ENCODE measurements at regions of chr4 and their contacts with region 1.

Region 1: GRCh38 chr4:123102897-123103471 is 180.6 kb upstream of the NUDT6 start:
- DNase-seq: no peak
- H3K4me3 ChIP-seq: no peak overlapping the region
- H3K27ac ChIP-seq: no peak overlapping the region
- H3K4me1 ChIP-seq: peaks cover 0 to 5% of the 10 kb centered on the region in 2 donors
- H3K27me3 ChIP-seq: no peaks in the 10 kb centered on the region
- CTCF ChIP-seq: peak; percentile 52 to 80 (median 70)
- POLR2A ChIP-seq: no peak

Region 2: DNA sequence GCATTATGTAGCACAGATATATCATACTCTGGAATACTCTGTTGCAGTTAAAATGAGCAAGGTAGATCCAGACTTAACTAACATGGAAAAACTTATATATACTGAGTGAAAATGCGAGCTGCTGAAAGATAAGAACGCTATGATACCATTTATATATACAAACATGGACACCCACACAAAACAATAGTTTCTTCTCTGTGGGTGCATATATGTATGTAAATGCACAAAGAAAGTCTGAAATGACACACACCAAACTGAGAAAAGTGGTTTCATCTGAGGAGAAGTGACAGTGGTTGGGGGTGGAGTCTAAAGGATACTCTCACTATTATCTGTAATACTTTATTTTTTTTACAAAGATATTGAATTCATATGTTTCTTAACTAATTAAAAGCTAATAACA is 288.6 kb before region 1 on chr4:
- intact Hi-C with region 1: no loop called
- DNase-seq: no peak
- H3K4me3 ChIP-seq: no peak overlapping the region
- H3K27ac ChIP-seq: no peak overlapping the region
- H3K4me1 ChIP-seq: no peaks in the 10 kb centered on the region
- H3K27me3 ChIP-seq: no peaks in the 10 kb centered on the region
- CTCF ChIP-seq: no peak
- POLR2A ChIP-seq: no peak

Region 3: DNA sequence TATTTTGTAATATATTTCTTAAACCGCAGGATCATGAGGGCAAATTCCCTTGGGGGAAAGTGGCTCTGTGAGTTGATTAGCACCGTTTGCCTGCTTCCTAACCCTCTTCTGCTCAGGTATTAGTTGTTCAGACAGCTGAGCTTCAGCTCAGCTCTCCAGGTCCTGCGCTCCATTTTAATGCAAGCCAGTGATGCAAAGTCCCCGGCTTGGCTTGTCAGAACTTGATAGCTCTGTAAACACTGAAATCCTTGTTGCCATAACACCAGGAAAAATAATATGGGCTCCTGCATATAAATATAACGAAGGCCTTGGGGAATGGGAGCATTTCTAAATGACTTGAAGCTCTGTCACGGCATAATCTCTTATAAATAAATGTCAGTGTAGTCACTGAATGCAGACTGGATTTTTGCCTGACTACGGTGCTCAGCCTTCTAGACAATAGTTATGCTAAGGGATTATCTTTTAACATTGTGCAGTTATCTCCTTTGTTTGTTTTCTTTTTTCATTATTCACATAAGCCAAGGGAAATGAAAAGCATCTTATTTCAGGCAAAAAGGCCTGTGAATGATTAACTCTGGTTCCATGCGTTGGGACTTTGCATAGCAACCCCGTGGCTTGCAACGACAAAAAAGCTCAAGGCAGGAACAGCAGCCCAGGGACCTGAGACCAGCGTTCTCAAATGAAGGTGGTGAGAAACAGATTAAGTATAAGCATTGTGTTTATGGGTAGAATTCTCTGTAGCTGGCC is 546.8 kb after region 1 on chr4:
- intact Hi-C with region 1: loop called in 1 of 2 experiments (anchors 10 kb)
- DNase-seq: no peak
- H3K4me3 ChIP-seq: no peak overlapping the region
- H3K27ac ChIP-seq: peak overlapping the region in 2 of 5 donors; percentile 13 to 37
- H3K4me1 ChIP-seq: peaks cover 0 to 8% of the 10 kb centered on the region in 2 donors
- H3K27me3 ChIP-seq: no peaks in the 10 kb centered on the region
- CTCF ChIP-seq: no peak
- POLR2A ChIP-seq: no peak

Region 4: DNA sequence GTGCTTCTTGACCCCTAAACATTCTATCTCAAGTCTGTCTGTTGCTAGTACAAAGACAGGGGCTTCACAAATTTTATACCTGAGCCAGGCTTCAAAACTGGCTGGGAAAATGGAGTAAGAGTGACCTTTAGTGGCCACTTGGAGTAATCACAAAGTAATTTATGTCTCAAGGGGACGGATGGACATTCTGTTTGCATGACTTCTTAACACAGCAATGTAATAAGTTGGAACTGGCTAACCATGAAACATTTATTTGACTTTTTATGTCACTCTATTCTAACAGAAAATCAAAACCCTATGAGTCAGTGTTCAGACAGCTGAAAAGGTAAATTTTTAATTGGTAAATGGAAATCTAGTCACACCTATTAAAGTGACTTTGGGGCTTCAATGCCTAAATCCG is 1008.9 kb after region 1 on chr4:
- intact Hi-C with region 1: loop called in 1 of 2 experiments (anchors 10 kb)
- DNase-seq: peak in 3 of 7 donors; percentile 16 to 53 (median 29)
- H3K4me3 ChIP-seq: no peak overlapping the region
- H3K27ac ChIP-seq: peak overlapping the region in 1 of 5 donors; percentile 55
- H3K4me1 ChIP-seq: peaks cover 0 to 7% of the 10 kb centered on the region in 2 donors
- H3K27me3 ChIP-seq: no peaks in the 10 kb centered on the region
- CTCF ChIP-seq: peak; percentile 38 to 89 (median 70)
- POLR2A ChIP-seq: no peak

Region 5: DNA sequence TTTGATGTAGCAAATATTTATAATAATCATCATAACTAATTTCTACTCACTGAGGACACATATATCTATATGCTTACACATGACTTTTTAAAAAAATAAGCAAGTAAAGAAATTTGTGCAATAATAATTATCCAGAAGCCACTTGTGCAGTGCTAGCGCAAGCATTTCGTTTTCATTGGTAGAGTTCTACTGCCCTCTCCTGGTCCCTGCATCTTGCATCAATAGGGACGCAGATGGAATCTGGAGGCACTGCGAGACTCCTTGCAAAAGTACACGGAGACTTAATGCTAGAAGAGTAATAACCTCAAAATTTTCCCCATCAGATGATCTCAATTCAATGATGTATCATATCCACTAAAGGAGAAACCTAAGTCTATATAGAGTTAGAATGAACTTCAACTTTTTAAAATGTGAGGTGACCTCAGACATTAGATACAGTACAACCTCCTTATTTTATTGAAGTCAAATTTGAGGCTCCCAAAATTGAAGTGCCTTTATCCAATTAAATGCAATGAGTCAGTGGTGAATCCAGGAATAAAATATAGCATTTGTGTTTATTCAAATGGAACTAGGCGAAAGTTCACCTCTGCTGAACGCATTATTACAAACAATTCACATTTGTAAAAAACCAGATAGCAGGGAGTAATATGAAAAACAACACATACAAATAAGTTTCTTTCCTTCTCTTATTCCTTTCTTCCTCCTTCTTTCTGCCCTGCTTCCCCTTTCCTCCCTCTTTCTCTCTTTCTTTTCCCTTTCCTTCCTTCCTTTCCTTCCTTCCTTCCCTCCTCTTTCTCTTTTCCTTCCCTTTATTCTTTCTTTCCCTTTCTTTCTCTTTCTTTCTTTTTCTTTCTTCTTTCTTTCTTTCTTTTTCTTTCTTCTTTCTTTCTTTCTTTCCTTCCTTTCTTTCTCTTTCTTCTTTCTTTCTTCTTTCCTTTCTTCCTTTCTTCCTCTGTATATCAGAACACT is 1159.5 kb after region 1 on chr4:
- intact Hi-C with region 1: loop called in 1 of 2 experiments (anchors 10 kb)
- DNase-seq: peak; percentile 52 to 83 (median 66)
- H3K4me3 ChIP-seq: no peak overlapping the region
- H3K27ac ChIP-seq: no peak overlapping the region
- H3K4me1 ChIP-seq: no peaks in the 10 kb centered on the region
- H3K27me3 ChIP-seq: no peaks in the 10 kb centered on the region
- CTCF ChIP-seq: peak; percentile 56 to 84 (median 80)
- POLR2A ChIP-seq: no peak

Measured in adrenal gland (tissue), 19 donors.